Endothelial cell of umbilical vein (primary cell): ENCODE measurements at regions of chr2 and their contacts with region 1.

Region 1: GRCh38 chr2:211879323-211879722 is 659.3 kb downstream of the ERBB4 start:
- DNase-seq: peak; percentile 47
- H3K4me3 ChIP-seq: no peak overlapping the region
- H3K27ac ChIP-seq: no peak overlapping the region
- H3K4me1 ChIP-seq: peaks cover 7% of the 10 kb centered on the region
- H3K27me3 ChIP-seq: no peaks in the 10 kb centered on the region
- CTCF ChIP-seq: peak in 1 of 2 donors; percentile 28
- POLR2A ChIP-seq: no peak

Region 2: GRCh38 chr2:210593166-210593565 is 1286.2 kb before region 1 on chr2:
- CTCF ChIA-PET with region 1: no interaction called
- POLR2A ChIA-PET with region 1: no interaction called
- dilution Hi-C with region 1: no loop called
- intact Hi-C with region 1: no loop called
- DNase-seq: no peak
- H3K4me3 ChIP-seq: no peak overlapping the region
- H3K27ac ChIP-seq: no peak overlapping the region
- H3K4me1 ChIP-seq: no peaks in the 10 kb centered on the region
- H3K27me3 ChIP-seq: peaks cover 0 to 2% of the 10 kb centered on the region in 2 experiments
- CTCF ChIP-seq: no peak
- POLR2A ChIP-seq: no peak

Region 3: GRCh38 chr2:211745295-211746097 is 133.8 kb before region 1 on chr2:
- CTCF ChIA-PET with region 1: interaction called, 9 read pairs
- POLR2A ChIA-PET with region 1: no interaction called
- dilution Hi-C with region 1: no loop called
- intact Hi-C with region 1: loop called (anchors 5 kb)
- DNase-seq: peak; percentile 56
- H3K4me3 ChIP-seq: no peak overlapping the region
- H3K27ac ChIP-seq: no peak overlapping the region
- H3K4me1 ChIP-seq: peaks cover 3% of the 10 kb centered on the region
- H3K27me3 ChIP-seq: no peaks in the 10 kb centered on the region
- CTCF ChIP-seq: peak; percentile 80 to 82
- POLR2A ChIP-seq: no peak

Region 4: GRCh38 chr2:211816754-211817153 is 62.6 kb before region 1 on chr2:
- CTCF ChIA-PET with region 1: no interaction called
- POLR2A ChIA-PET with region 1: no interaction called
- dilution Hi-C with region 1: no loop called
- intact Hi-C with region 1: no loop called
- DNase-seq: no peak
- H3K4me3 ChIP-seq: no peak overlapping the region
- H3K27ac ChIP-seq: no peak overlapping the region
- H3K4me1 ChIP-seq: no peaks in the 10 kb centered on the region
- H3K27me3 ChIP-seq: no peaks in the 10 kb centered on the region
- CTCF ChIP-seq: no peak
- POLR2A ChIP-seq: no peak

Region 5: GRCh38 chr2:212109792-212110680 is 230.7 kb after region 1 on chr2:
- CTCF ChIA-PET with region 1: interaction called, 4 read pairs
- POLR2A ChIA-PET with region 1: interaction called, 18 read pairs
- dilution Hi-C with region 1: no loop called
- intact Hi-C with region 1: no loop called
- DNase-seq: peak; percentile 92
- H3K4me3 ChIP-seq: peak overlapping the region in 1 of 3 experiments; percentile 5
- H3K27ac ChIP-seq: peak overlapping the region; percentile 20
- H3K4me1 ChIP-seq: peaks cover 26% of the 10 kb centered on the region
- H3K27me3 ChIP-seq: no peaks in the 10 kb centered on the region
- CTCF ChIP-seq: no peak
- POLR2A ChIP-seq: no peak

Region 6: GRCh38 chr2:212135739-212136138 is 256.4 kb after region 1 on chr2:
- CTCF ChIA-PET with region 1: no interaction called
- POLR2A ChIA-PET with region 1: no interaction called
- dilution Hi-C with region 1: no loop called
- intact Hi-C with region 1: loop called (anchors 10 kb)
- DNase-seq: peak; percentile 49
- H3K4me3 ChIP-seq: no peak overlapping the region
- H3K27ac ChIP-seq: no peak overlapping the region
- H3K4me1 ChIP-seq: peaks cover 5% of the 10 kb centered on the region
- H3K27me3 ChIP-seq: no peaks in the 10 kb centered on the region
- CTCF ChIP-seq: no peak
- POLR2A ChIP-seq: no peak

Region 7: DNA sequence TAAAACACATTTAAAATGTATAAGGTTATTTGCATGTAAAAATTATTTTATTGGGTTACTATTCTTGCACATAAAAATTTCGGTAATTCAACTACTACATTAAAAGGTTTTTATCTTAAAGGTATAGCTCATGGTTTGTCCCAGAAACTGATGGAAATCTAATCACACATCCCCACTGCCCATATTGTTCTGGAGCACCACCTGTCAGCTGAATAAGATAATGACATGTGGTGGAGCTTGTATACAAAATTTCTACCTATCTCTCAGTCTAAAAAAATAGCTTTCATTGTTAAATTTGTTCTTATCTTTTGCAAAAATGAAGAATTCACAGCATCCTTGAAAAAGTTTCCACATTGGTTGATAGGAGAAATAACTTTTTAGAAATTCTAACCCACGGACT is 641.0 kb after region 1 on chr2:
- CTCF ChIA-PET with region 1: interaction called, 56 read pairs
- POLR2A ChIA-PET with region 1: no interaction called
- dilution Hi-C with region 1: no loop called
- intact Hi-C with region 1: no loop called
- DNase-seq: peak; percentile 13
- H3K4me3 ChIP-seq: no peak overlapping the region
- H3K27ac ChIP-seq: no peak overlapping the region
- H3K4me1 ChIP-seq: no peaks in the 10 kb centered on the region
- H3K27me3 ChIP-seq: no peaks in the 10 kb centered on the region
- CTCF ChIP-seq: no peak
- POLR2A ChIP-seq: no peak

Region 8: GRCh38 chr2:212536817-212537725 is 657.7 kb after region 1 on chr2:
- CTCF ChIA-PET with region 1: interaction called, 12 read pairs
- POLR2A ChIA-PET with region 1: no interaction called
- dilution Hi-C with region 1: no loop called
- intact Hi-C with region 1: loop called (anchors 5 kb)
- DNase-seq: peak; percentile 20
- H3K4me3 ChIP-seq: peak overlapping the region; percentile 39 to 88 (median 86)
- H3K27ac ChIP-seq: no peak overlapping the region
- H3K4me1 ChIP-seq: peaks cover 18% of the 10 kb centered on the region
- H3K27me3 ChIP-seq: peaks cover 14 to 31% of the 10 kb centered on the region in 2 experiments
- CTCF ChIP-seq: no peak
- POLR2A ChIP-seq: no peak

Region 9: DNA sequence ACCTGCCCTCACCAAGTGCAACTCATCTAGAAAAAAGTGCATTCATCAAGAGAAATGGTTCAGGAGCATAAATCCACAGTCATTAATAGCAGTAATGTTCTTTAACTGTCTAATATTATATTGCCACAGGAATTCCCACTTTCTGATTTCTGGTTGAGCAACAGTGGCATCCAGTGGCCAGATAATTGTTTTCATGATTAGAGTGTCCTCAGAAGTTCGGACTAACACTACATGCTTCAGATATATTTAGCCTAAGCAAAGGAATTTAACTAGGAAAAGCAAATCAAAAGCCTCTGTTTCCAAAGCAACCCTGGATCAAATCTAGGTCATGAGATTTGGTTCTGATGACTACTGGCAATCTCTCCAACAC is 669.1 kb after region 1 on chr2:
- CTCF ChIA-PET with region 1: interaction called, 20 read pairs
- POLR2A ChIA-PET with region 1: no interaction called
- dilution Hi-C with region 1: no loop called
- intact Hi-C with region 1: no loop called
- DNase-seq: peak; percentile 54
- H3K4me3 ChIP-seq: no peak overlapping the region
- H3K27ac ChIP-seq: no peak overlapping the region
- H3K4me1 ChIP-seq: no peaks in the 10 kb centered on the region
- H3K27me3 ChIP-seq: no peaks in the 10 kb centered on the region
- CTCF ChIP-seq: peak; percentile 12 to 13
- POLR2A ChIP-seq: no peak